Activated CD4-positive, alpha-beta T cell treated with anti-CD3 and anti-CD28 coated beads for 36 hours (primary cell): ENCODE measurements at regions of chr1 and their contacts with region 1.

Region 1: GRCh38 chr1:232630047-232630893 is at the start of gene SIPA1L2:
- DNase-seq: peak; percentile 93
- ATAC-seq: peak; percentile 96
- H3K4me3 Mint-ChIP-seq: peak within 1 kb of the TSS; percentile 73
- H3K27ac Mint-ChIP-seq: peak within 1 kb of the TSS; percentile 80
- H3K4me1 Mint-ChIP-seq: peaks cover 28% of the 10 kb centered on the region
- H3K27me3 Mint-ChIP-seq: peaks cover 11% of the 10 kb centered on the region
- total RNA-seq, gene SIPA1L2: 3.7 to 4.0 TPM

Region 2: GRCh38 chr1:231626535-231626945 is 1003.7 kb before region 1 on chr1 and contains the start of gene DISC1:
- CTCF ChIA-PET with region 1: no interaction called
- POLR2A ChIA-PET with region 1: no interaction called
- intact Hi-C with region 1: loop called in 1 of 2 experiments (anchors 5 kb)
- DNase-seq: peak; percentile 80
- ATAC-seq: peak; percentile 60
- H3K4me3 Mint-ChIP-seq: peak within 1 kb of the TSS; percentile 80
- H3K27ac Mint-ChIP-seq: peak within 1 kb of the TSS; percentile 71
- H3K4me1 Mint-ChIP-seq: peaks cover 32% of the 10 kb centered on the region
- H3K27me3 Mint-ChIP-seq: peaks cover 3% of the 10 kb centered on the region
- total RNA-seq, gene DISC1: 1.9 to 3.8 TPM

Region 3: DNA sequence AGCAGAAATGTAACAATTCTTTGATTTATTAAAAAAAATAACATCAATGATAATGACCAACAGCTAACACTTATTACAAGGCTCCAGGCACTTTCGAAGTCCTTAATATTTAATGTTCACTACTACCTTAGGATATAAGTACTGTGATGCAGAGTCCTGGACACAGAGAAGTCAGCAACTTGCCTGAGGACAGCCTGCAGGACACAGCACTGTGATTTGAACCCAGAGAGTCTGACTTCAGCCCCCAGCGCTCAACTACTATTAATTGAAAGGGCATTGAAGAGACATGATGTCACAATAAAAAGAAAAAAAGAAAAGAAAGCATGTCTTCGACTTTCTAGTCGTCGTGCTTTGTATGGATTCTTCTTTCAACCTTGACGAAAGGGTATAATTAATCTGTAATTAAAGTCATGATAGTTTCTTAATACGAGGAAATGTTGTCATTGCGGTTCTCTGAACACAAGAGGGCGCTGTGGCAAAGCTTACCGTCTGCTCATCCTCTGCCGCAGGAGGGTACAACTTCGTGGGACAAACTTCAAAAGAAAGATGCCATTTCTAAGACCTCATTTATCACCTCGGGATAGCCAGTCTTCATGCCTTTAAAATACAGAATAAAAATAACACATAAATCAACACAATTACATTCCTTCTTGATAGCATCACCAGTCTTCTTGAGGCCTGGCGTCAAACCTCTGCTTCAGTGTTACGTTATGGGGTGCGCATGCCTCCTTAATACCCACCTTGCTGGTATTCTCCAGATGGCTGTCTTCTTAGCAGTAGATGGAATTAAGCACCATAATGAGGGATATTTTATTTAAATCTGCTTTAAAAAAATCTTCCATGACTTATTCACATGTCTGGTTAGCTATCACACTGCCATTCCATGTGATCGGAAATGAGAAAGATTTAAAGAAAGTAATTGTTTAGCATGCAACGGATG is 763.6 kb before region 1 on chr1:
- CTCF ChIA-PET with region 1: no interaction called
- POLR2A ChIA-PET with region 1: no interaction called
- intact Hi-C with region 1: loop called (anchors 1 to 5 kb)
- DNase-seq: peak; percentile 77
- ATAC-seq: peak; percentile 36
- H3K4me3 Mint-ChIP-seq: no peak overlapping the region
- H3K27ac Mint-ChIP-seq: no peak overlapping the region
- H3K4me1 Mint-ChIP-seq: peaks cover 26% of the 10 kb centered on the region
- H3K27me3 Mint-ChIP-seq: no peaks in the 10 kb centered on the region

Region 4: GRCh38 chr1:232477728-232478127 is 152.5 kb before region 1 on chr1:
- CTCF ChIA-PET with region 1: no interaction called
- POLR2A ChIA-PET with region 1: no interaction called
- intact Hi-C with region 1: no loop called
- DNase-seq: no peak
- ATAC-seq: no peak
- H3K4me3 Mint-ChIP-seq: no peak overlapping the region
- H3K27ac Mint-ChIP-seq: no peak overlapping the region
- H3K4me1 Mint-ChIP-seq: no peaks in the 10 kb centered on the region
- H3K27me3 Mint-ChIP-seq: no peaks in the 10 kb centered on the region

Region 5: DNA sequence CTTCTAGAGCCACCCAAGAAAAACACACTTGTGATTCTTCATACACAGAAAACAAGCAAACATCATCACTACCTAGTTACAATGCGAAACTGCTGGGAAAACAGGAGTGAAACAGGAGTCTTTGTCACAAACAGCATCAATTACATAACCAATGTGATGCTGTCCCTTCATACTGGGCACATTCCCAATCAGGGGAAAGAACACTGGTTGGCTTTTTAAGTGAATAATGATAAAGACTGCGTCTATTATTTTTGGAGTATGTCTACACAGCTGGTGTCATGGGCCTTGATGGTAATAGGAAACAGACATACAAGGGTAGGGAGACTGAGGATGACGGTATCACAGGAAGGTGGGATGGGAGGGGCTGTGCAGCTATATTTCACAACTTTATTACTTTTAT is 43.6 kb before region 1 on chr1:
- CTCF ChIA-PET with region 1: interaction called, 3 read pairs
- POLR2A ChIA-PET with region 1: no interaction called
- intact Hi-C with region 1: loop called in 1 of 2 experiments (anchors 2 kb)
- DNase-seq: no peak
- ATAC-seq: no peak
- H3K4me3 Mint-ChIP-seq: no peak overlapping the region
- H3K27ac Mint-ChIP-seq: no peak overlapping the region
- H3K4me1 Mint-ChIP-seq: peaks cover 34% of the 10 kb centered on the region
- H3K27me3 Mint-ChIP-seq: no peaks in the 10 kb centered on the region

Region 6: GRCh38 chr1:232950197-232951176 is 320.2 kb after region 1 on chr1 and contains the start of gene NTPCR:
- CTCF ChIA-PET with region 1: interaction called, 3 read pairs
- POLR2A ChIA-PET with region 1: no interaction called
- intact Hi-C with region 1: loop called (anchors 1 to 5 kb)
- DNase-seq: peak; percentile 98
- ATAC-seq: peak; percentile 91
- H3K4me3 Mint-ChIP-seq: peak within 1 kb of the TSS; percentile 90
- H3K27ac Mint-ChIP-seq: peak within 1 kb of the TSS; percentile 95
- H3K4me1 Mint-ChIP-seq: peaks cover 35% of the 10 kb centered on the region
- H3K27me3 Mint-ChIP-seq: no peaks in the 10 kb centered on the region
- total RNA-seq, gene NTPCR: 37.4 to 51.9 TPM